CD4-positive, alpha-beta T cell (primary cell): ENCODE measurements at regions of chr20 and their contacts with region 1.

Region 1: GRCh38 chr20:58980700-58981627 is at the start of gene NELFCD:
- DNase-seq: peak; percentile 79 to 95 (median 88)
- ATAC-seq: peak; percentile 92
- H3K4me3 ChIP-seq: peak within 1 kb of the TSS; percentile 82
- H3K4me3 Mint-ChIP-seq: peak within 1 kb of the TSS; percentile 92
- H3K27ac ChIP-seq: peak within 1 kb of the TSS; percentile 41 to 52
- H3K27ac Mint-ChIP-seq: peak within 1 kb of the TSS; percentile 87
- H3K4me1 ChIP-seq: peaks cover 42% of the 10 kb centered on the region
- H3K4me1 Mint-ChIP-seq: peaks cover 43% of the 10 kb centered on the region
- H3K27me3 ChIP-seq: no peaks in the 10 kb centered on the region
- H3K27me3 Mint-ChIP-seq: no peaks in the 10 kb centered on the region
- CTCF ChIP-seq: no peak
- total RNA-seq, gene NELFCD: 95.7 to 97.0 TPM

Region 2: GRCh38 chr20:57048027-57048869 is 1932.7 kb before region 1 on chr20:
- CTCF ChIA-PET with region 1: no interaction called
- POLR2A ChIA-PET with region 1: no interaction called
- intact Hi-C with region 1: no loop called
- DNase-seq: peak in 1 of 14 experiments; percentile 3
- ATAC-seq: no peak
- H3K4me3 ChIP-seq: no peak overlapping the region
- H3K4me3 Mint-ChIP-seq: no peak overlapping the region
- H3K27ac ChIP-seq: no peak overlapping the region
- H3K27ac Mint-ChIP-seq: no peak overlapping the region
- H3K4me1 ChIP-seq: no peaks in the 10 kb centered on the region
- H3K4me1 Mint-ChIP-seq: no peaks in the 10 kb centered on the region
- H3K27me3 ChIP-seq: peaks cover 0 to 2% of the 10 kb centered on the region in 2 experiments
- H3K27me3 Mint-ChIP-seq: peaks cover 6% of the 10 kb centered on the region
- CTCF ChIP-seq: peak; percentile 13

Region 3: DNA sequence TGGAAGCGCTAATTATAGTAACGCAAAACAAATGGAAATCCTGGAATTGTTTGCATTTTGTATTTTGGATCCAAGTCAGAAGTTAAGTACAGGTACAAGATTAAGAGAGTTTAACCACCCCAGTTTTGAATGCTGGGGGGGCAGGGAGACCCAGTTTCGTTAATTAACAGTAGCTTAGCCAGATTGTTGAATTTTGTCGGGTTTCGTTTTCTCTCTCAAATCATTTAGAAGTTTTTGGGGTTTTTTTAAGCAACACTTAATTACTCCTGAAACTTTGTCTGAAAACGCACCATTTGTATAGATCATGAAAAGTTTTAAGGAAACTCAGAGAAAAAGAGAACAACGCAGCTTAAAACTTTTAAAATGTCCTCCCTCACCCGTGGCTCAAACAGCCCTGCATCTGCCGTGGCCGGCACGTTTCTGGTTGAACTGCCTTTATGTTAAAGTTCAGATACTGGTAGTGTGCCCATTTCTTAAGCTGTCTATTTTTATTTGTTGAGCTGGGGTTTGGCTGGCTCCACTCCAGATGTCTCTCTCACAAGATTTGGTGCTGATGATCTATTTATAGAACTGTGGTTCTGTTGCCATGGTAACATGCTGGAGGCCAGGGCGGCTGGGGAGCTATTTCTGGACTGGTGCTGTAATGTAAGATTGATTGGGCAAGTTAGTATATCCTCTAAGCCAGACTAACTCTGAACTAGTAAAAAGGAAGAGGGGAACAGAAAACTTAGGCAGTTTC is 73.4 kb before region 1 on chr20:
- CTCF ChIA-PET with region 1: no interaction called
- POLR2A ChIA-PET with region 1: no interaction called
- intact Hi-C with region 1: loop called in 1 of 2 experiments (anchors 5 kb)
- DNase-seq: peak in 11 of 14 experiments; percentile 12 to 87 (median 39)
- ATAC-seq: peak; percentile 45
- H3K4me3 ChIP-seq: no peak overlapping the region
- H3K4me3 Mint-ChIP-seq: peak overlapping the region; percentile 75
- H3K27ac ChIP-seq: peak overlapping the region; percentile 49 to 58
- H3K27ac Mint-ChIP-seq: peak overlapping the region; percentile 70
- H3K4me1 ChIP-seq: peaks cover 26% of the 10 kb centered on the region
- H3K4me1 Mint-ChIP-seq: peaks cover 78% of the 10 kb centered on the region
- H3K27me3 ChIP-seq: no peaks in the 10 kb centered on the region
- H3K27me3 Mint-ChIP-seq: no peaks in the 10 kb centered on the region
- CTCF ChIP-seq: no peak